HCT116 (cell line): ENCODE measurements at regions of chr12 and their contacts with region 1.

Region 1: GRCh38 chr12:66169221-66170170 is at the start of gene TMBIM4:
- DNase-seq: peak; percentile 91
- ATAC-seq: peak; percentile 96
- H3K4me3 ChIP-seq: peak within 1 kb of the TSS; percentile 62 to 67
- H3K27ac ChIP-seq: peak within 1 kb of the TSS; percentile 98
- H3K4me1 ChIP-seq: peaks cover 4 to 19% of the 10 kb centered on the region in 2 experiments
- H3K27me3 ChIP-seq: no peaks in the 10 kb centered on the region
- CTCF ChIP-seq: peak; percentile 35 to 60 (median 57); a peak in 3 of 6 replicates
- POLR2A ChIP-seq: peak; percentile 81
- RAD21 ChIP-seq: peak; percentile 41
- total RNA-seq, gene TMBIM4: 51.1 TPM

Region 2: GRCh38 chr12:66130277-66131066 is 39.0 kb before region 1 on chr12 and contains the start of gene LLPH:
- CTCF ChIA-PET with region 1: interaction called, 5 read pairs
- POLR2A ChIA-PET with region 1: interaction called, 11 read pairs
- RAD21 ChIA-PET with region 1: interaction called in 1 of 2 experiments, 4 read pairs
- intact Hi-C with region 1: loop called (anchors 5 kb)
- DNase-seq: peak; percentile 94
- ATAC-seq: peak; percentile 90
- H3K4me3 ChIP-seq: peak within 1 kb of the TSS; percentile 59 to 74
- H3K27ac ChIP-seq: peak within 1 kb of the TSS; percentile 65
- H3K4me1 ChIP-seq: peaks cover 15 to 29% of the 10 kb centered on the region in 2 experiments
- H3K27me3 ChIP-seq: no peaks in the 10 kb centered on the region
- CTCF ChIP-seq: no peak
- POLR2A ChIP-seq: peak; percentile 89
- RAD21 ChIP-seq: no peak
- total RNA-seq, gene LLPH: 45.6 TPM

Region 3: GRCh38 chr12:66190519-66191370 is 21.2 kb after region 1 on chr12:
- CTCF ChIA-PET with region 1: interaction called, 4 read pairs
- POLR2A ChIA-PET with region 1: interaction called, 11 read pairs
- RAD21 ChIA-PET with region 1: no interaction called
- intact Hi-C with region 1: no loop called
- DNase-seq: no peak
- ATAC-seq: no peak
- H3K4me3 ChIP-seq: no peak overlapping the region
- H3K27ac ChIP-seq: no peak overlapping the region
- H3K4me1 ChIP-seq: no peaks in the 10 kb centered on the region
- H3K27me3 ChIP-seq: no peaks in the 10 kb centered on the region
- CTCF ChIP-seq: no peak
- POLR2A ChIP-seq: no peak
- RAD21 ChIP-seq: no peak

Region 4: DNA sequence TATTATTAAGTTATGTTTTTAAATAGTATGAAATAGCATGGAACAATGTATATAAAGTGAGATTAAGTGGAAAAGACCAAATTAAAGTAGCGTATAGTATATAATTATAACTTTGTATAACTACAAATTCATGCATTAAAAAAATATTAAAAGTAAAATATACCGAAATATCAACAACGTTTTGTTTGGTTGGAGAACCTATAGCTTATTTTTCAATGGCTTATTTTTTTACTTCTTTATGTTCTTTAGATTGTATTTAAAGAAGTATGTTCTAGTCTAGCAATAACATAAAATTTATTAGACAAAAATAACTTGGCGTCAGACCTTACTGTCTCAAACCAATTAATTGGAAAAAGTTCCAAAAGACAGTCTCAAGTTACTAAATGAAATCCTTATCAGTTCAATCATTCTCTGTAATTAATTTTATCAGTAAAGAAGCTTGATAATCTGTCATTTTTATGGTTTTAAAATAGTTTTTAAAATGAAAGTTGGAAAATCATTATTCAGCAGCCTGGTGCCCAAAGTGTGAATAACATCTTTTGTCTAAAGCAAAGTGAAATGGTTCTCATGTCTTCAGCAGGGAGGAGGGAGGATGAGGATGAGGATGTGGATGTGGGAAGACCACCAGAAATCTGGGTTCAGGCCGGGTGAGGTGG is 66.3 kb after region 1 on chr12:
- CTCF ChIA-PET with region 1: interaction called, 9 read pairs
- POLR2A ChIA-PET with region 1: interaction called, 11 read pairs
- RAD21 ChIA-PET with region 1: interaction called in 1 of 2 experiments, 4 read pairs
- intact Hi-C with region 1: loop called (anchors 2 kb)
- DNase-seq: no peak
- ATAC-seq: no peak
- H3K4me3 ChIP-seq: peak overlapping the region; percentile 41 to 59
- H3K27ac ChIP-seq: no peak overlapping the region
- H3K4me1 ChIP-seq: peaks cover 6 to 17% of the 10 kb centered on the region in 2 experiments; a peak in 3 of 4 replicates
- H3K27me3 ChIP-seq: no peaks in the 10 kb centered on the region; the same call in 1 of the 2 replicates
- CTCF ChIP-seq: peak in 1 of 3 experiments; percentile 16; a peak in 2 of 6 replicates
- POLR2A ChIP-seq: no peak
- RAD21 ChIP-seq: no peak

Region 5: GRCh38 chr12:66301944-66302826 is 132.7 kb after region 1 on chr12 and contains the start of gene HELB:
- CTCF ChIA-PET with region 1: interaction called, 3 read pairs
- POLR2A ChIA-PET with region 1: interaction called, 5 read pairs
- RAD21 ChIA-PET with region 1: no interaction called
- intact Hi-C with region 1: loop called (anchors 2 kb)
- DNase-seq: peak; percentile 99
- ATAC-seq: peak; percentile 95
- H3K4me3 ChIP-seq: peak within 1 kb of the TSS; percentile 81 to 86
- H3K27ac ChIP-seq: peak within 1 kb of the TSS; percentile 54
- H3K4me1 ChIP-seq: peaks cover 8 to 11% of the 10 kb centered on the region in 2 experiments; a peak in 3 of 4 replicates
- H3K27me3 ChIP-seq: no peaks in the 10 kb centered on the region
- CTCF ChIP-seq: no peak
- POLR2A ChIP-seq: peak; percentile 53
- RAD21 ChIP-seq: no peak
- total RNA-seq, gene HELB: 9.3 TPM

Region 6: DNA sequence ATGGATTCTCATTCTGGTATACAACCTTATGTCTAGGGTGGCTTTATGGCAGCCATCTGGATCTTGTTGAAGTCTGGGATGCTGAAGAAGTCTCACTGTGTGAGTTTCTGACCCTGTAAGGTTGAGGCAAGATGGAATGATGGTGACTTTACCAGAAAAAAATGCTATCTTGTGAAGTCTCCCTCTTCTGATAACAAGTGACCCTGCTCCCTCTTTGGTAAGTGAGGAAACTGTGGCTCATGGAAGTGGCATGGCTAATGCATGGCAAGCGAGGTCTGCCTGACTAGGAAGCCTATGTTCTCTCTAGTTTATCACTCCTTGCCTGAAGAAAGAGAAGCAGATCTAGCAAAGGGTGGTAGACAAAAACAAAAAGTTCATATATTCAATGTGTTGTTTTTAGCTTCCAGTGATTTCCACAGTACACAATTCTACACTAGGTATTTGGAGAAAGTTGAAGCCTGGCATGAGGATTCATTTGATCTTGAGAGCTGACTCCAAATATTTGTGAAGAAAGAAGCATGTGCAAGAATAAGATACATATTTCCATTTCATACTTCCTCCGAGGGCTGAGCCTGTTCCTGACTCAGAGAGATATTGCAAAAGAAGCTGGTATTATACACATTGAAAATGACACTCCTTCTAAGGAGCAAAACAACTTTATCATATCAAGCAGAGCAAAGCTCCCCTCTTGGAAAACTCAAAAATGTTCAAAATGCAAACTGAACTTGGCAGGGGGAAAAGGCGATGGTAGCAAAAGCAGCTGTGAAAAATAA is 196.4 kb after region 1 on chr12:
- CTCF ChIA-PET with region 1: no interaction called
- POLR2A ChIA-PET with region 1: no interaction called
- RAD21 ChIA-PET with region 1: no interaction called
- intact Hi-C with region 1: no loop called
- DNase-seq: no peak
- ATAC-seq: no peak
- H3K4me3 ChIP-seq: no peak overlapping the region
- H3K27ac ChIP-seq: no peak overlapping the region
- H3K4me1 ChIP-seq: no peaks in the 10 kb centered on the region
- H3K27me3 ChIP-seq: peaks cover 28% of the 10 kb centered on the region
- CTCF ChIP-seq: no peak
- POLR2A ChIP-seq: no peak
- RAD21 ChIP-seq: no peak

Region 7: DNA sequence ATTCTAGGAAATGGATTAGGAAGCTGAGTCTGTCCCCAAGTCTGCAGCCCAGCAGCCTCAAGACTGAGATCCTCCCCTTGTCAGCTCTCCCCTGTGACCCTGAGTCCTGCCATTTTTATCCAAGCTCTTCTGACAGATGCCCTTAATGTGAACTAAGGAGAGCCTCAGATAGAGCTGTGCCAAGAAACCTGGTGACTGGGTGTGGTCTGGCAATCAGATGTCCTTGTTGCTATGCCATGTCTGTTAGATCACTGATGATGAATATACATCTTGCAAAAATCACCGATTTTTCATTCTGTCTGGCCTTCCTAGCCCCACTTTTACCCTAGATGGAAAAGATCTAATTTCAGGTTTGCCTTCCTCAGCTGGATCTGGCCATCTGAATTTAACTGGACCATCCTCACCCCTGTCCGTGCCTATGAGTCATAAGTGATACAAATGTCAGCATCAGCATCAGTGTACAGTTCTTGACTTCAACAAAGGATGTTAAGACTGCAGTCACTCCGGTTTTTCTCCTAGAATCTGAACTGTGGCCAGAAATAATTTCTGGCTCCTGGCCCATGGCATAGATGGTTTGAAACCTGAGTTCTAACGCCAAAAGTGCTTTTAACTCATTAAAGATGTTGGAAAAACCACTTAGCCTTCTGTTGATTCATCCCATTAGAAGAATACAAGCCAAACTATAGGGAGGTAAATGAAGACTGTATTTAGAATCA is 570.6 kb after region 1 on chr12:
- CTCF ChIA-PET with region 1: no interaction called
- POLR2A ChIA-PET with region 1: no interaction called
- RAD21 ChIA-PET with region 1: no interaction called
- intact Hi-C with region 1: no loop called
- DNase-seq: no peak
- ATAC-seq: no peak
- H3K4me3 ChIP-seq: no peak overlapping the region
- H3K27ac ChIP-seq: no peak overlapping the region
- H3K4me1 ChIP-seq: no peaks in the 10 kb centered on the region
- H3K27me3 ChIP-seq: peaks cover 23% of the 10 kb centered on the region; the same call in 1 of the 2 replicates
- CTCF ChIP-seq: no peak
- POLR2A ChIP-seq: no peak
- RAD21 ChIP-seq: no peak